BJ (cell line): ENCODE measurements at regions of chr1 and their contacts with region 1.

Region 1: GRCh38 chr1:99481391-99481996 is 164.4 kb upstream of the PALMD start:
- DNase-seq: no peak
- H3K4me3 ChIP-seq: no peak overlapping the region
- H3K27me3 ChIP-seq: no peaks in the 10 kb centered on the region
- CTCF ChIP-seq: peak; percentile 73

Region 2: GRCh38 chr1:98794196-98794886 is 687.2 kb before region 1 on chr1:
- CTCF ChIA-PET with region 1: interaction called, 11 read pairs
- POLR2A ChIA-PET with region 1: no interaction called
- DNase-seq: peak; percentile 26
- H3K4me3 ChIP-seq: no peak overlapping the region
- H3K27me3 ChIP-seq: no peaks in the 10 kb centered on the region; the same call in 1 of the 2 replicates
- CTCF ChIP-seq: peak; percentile 80

Region 3: GRCh38 chr1:99180343-99180808 is 301.1 kb before region 1 on chr1:
- CTCF ChIA-PET with region 1: interaction called, 58 read pairs
- POLR2A ChIA-PET with region 1: no interaction called
- DNase-seq: peak; percentile 13
- H3K4me3 ChIP-seq: no peak overlapping the region
- H3K27me3 ChIP-seq: no peaks in the 10 kb centered on the region
- CTCF ChIP-seq: peak; percentile 71

Region 4: DNA sequence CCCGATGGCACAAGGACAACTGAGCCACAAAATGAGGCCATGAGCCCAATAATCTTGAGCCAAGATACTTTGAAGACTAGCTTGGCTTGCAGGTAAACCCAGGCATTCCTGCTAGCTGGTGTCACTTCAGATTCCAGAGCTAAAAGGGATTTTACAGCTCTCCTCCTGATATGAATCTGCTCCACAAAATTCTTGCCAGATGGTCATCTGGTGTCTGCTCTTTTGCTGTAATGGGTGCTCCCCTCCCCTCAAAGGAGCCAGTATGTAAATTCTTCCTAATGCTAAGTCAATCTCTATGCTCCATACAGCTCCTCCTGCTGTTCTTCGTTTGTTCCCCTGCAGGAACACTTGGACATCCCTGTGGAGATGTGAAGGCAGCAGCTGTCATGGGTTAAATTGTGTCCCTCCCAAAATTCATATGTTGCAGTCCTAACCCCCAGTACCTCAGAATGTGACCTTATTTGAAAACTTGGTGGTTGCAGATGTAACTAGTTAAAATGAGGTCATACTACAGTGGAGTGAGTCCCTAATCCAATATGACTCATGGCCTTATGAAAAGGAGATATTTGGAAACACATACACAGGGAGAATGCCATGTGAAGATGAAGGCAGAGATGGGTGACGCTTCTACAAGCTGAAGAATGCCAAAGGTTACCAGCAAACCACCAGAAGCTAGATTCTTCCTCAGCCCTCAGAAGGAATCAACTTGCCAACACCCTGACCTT is 16.2 kb before region 1 on chr1:
- CTCF ChIA-PET with region 1: interaction called, 10 read pairs
- POLR2A ChIA-PET with region 1: no interaction called
- DNase-seq: peak; percentile 93
- H3K4me3 ChIP-seq: no peak overlapping the region
- H3K27me3 ChIP-seq: no peaks in the 10 kb centered on the region
- CTCF ChIP-seq: peak; percentile 45; the same call in 1 of the 2 replicates

Region 5: DNA sequence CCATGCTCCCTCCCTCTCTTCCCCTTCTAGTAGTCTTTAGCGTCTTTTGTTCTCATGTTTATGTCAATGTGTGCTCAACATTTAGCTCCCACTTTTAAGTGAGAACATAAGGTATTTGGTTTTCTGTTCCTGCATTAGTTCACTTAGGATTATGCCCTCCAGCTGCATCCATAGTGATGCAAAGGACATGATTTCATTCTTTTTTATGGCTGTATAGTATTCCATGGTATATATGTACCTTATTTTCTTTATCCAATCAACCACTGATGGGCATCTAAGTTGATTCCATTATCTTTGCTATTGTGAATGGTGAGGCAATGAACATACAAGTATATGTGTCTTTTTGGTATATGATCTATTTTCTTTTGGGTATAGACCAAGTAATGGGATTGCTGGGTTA is 126.1 kb after region 1 on chr1:
- CTCF ChIA-PET with region 1: no interaction called
- POLR2A ChIA-PET with region 1: no interaction called
- DNase-seq: no peak
- H3K4me3 ChIP-seq: no peak overlapping the region
- H3K27me3 ChIP-seq: no peaks in the 10 kb centered on the region
- CTCF ChIP-seq: no peak

Region 6: DNA sequence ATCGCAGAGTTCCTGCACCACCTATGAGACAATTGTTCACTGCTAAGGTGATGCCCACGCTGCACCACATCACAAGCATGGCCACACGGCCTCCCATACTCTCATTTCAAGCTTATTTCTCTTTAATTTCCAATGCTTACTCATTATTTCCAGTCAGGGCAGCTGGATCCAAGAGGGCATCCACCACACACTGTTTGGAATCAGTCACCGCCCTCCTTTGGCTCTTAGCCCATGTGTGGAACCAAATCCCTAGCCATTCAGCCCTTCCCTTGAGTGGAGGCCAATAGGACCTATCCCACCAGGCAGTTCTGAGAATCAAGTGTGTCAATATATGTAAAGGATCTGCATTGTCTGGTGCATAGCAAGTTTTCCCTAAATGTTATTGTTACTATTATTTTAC is 138.1 kb after region 1 on chr1:
- CTCF ChIA-PET with region 1: no interaction called
- POLR2A ChIA-PET with region 1: no interaction called
- DNase-seq: no peak
- H3K4me3 ChIP-seq: no peak overlapping the region
- H3K27me3 ChIP-seq: no peaks in the 10 kb centered on the region
- CTCF ChIP-seq: no peak